ENCODE measurements at regions of chr17 and their contacts with region 1.

Region 1: DNA sequence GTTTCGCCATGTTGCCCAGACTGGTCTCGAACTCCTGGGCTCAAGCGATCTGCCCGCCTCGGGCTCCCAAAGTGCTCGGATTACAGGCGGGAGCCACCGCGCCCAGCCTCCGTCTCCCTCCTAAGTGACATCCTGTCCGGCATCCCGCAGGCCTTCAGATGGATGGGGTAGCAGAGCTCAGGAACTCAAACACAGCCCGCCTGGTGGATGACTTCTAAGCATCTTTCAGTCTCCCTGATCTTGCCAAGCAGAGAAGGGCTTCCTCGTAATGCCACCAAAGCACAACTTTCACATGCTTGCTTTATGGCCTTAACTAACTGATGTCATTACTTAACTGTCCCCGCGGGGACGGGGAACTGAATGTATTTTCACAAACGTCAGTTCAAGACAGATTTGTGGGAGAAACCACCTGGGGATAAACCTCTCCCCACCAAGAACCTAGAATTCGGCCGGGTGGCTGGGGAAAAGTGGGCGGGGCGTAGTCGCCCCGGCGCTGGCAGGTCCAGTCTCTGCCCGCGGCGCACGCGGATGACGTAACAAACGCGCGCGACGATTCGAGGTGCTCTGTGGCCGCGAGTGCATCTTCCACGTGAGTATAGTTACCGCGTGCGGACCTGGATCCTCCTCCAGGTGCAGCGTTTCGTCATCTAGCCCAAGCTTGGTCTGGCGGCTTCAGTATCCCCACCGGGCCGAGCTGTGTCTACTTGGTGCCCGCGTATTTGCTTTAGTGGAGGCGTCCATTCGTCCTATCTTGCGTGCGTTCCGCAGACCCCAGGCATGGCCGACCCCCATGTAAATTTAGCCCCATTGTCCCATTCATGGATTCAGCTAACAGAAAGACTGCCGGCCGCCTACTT is at the start of gene PFAS:
- DNase-seq: peak; percentile 98
- H3K4me3 Mint-ChIP-seq: peak within 1 kb of the TSS; percentile 99
- H3K27ac Mint-ChIP-seq: peak within 1 kb of the TSS; percentile 97
- H3K4me1 Mint-ChIP-seq: peaks cover 38% of the 10 kb centered on the region
- H3K27me3 Mint-ChIP-seq: no peaks in the 10 kb centered on the region
- total RNA-seq, gene PFAS: 102 to 105 TPM

Region 2: GRCh38 chr17:8138672-8139371 is 110.2 kb before region 1 on chr17:
- CTCF ChIA-PET with region 1: no interaction called
- POLR2A ChIA-PET with region 1: no interaction called
- intact Hi-C with region 1: loop called (anchors 1 kb)
- DNase-seq: peak; percentile 98
- H3K4me3 Mint-ChIP-seq: no peak overlapping the region
- H3K27ac Mint-ChIP-seq: no peak overlapping the region
- H3K4me1 Mint-ChIP-seq: peaks cover 2% of the 10 kb centered on the region
- H3K27me3 Mint-ChIP-seq: peaks cover 1% of the 10 kb centered on the region

Region 3: DNA sequence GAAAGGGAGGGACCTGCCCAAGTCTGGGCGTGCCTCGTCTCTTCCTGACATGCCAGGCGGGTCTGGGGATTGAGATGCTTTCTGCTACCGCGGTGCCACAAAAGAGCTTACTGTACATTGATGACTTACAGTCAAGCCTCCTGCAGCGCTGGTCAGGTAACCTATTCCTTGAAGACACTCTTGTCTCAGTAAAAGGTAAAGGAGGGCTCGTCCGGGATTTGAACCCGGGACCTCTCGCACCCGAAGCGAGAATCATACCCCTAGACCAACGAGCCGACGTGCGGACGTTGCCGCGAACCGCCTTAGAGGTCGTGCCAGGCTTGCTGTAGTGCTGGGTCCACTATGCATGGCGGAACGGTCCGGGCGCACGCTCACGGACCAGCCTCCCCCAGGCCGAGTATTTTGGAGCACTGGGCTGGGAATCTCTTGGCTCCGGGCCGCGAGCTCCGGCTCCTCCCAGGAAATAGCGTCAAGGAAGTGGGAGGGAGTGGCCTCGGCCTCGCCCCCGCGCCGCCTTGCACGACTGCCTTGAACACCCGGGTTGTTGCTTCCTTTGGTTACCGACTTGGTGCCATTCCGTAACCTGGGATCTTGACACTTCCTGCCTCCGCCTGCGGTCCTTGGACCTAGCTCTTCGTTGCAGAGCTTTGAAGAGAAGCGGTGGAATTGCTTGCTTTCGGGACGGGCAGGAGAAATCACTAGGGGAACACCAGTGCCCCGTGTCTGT is 26.2 kb before region 1 on chr17:
- CTCF ChIA-PET with region 1: interaction called, 37 read pairs
- POLR2A ChIA-PET with region 1: interaction called, 134 read pairs
- intact Hi-C with region 1: loop called (anchors 1 kb)
- DNase-seq: peak; percentile 94
- H3K4me3 Mint-ChIP-seq: peak overlapping the region; percentile 98
- H3K27ac Mint-ChIP-seq: peak overlapping the region; percentile 98
- H3K4me1 Mint-ChIP-seq: peaks cover 47% of the 10 kb centered on the region
- H3K27me3 Mint-ChIP-seq: peaks cover 14% of the 10 kb centered on the region

Region 4: GRCh38 chr17:8294814-8295316 is 45.9 kb after region 1 on chr17:
- CTCF ChIA-PET with region 1: interaction called, 14 read pairs
- POLR2A ChIA-PET with region 1: interaction called, 17 read pairs
- intact Hi-C with region 1: loop called (anchors 1 kb)
- DNase-seq: no peak
- H3K4me3 Mint-ChIP-seq: peak overlapping the region; percentile 80
- H3K27ac Mint-ChIP-seq: peak overlapping the region; percentile 77
- H3K4me1 Mint-ChIP-seq: peaks cover 33% of the 10 kb centered on the region
- H3K27me3 Mint-ChIP-seq: no peaks in the 10 kb centered on the region

Region 5: GRCh38 chr17:8359769-8360168 is 110.8 kb after region 1 on chr17:
- CTCF ChIA-PET with region 1: no interaction called
- POLR2A ChIA-PET with region 1: no interaction called
- intact Hi-C with region 1: no loop called
- DNase-seq: no peak
- H3K4me3 Mint-ChIP-seq: no peak overlapping the region
- H3K27ac Mint-ChIP-seq: no peak overlapping the region
- H3K4me1 Mint-ChIP-seq: peaks cover 5% of the 10 kb centered on the region
- H3K27me3 Mint-ChIP-seq: no peaks in the 10 kb centered on the region

Region 6: DNA sequence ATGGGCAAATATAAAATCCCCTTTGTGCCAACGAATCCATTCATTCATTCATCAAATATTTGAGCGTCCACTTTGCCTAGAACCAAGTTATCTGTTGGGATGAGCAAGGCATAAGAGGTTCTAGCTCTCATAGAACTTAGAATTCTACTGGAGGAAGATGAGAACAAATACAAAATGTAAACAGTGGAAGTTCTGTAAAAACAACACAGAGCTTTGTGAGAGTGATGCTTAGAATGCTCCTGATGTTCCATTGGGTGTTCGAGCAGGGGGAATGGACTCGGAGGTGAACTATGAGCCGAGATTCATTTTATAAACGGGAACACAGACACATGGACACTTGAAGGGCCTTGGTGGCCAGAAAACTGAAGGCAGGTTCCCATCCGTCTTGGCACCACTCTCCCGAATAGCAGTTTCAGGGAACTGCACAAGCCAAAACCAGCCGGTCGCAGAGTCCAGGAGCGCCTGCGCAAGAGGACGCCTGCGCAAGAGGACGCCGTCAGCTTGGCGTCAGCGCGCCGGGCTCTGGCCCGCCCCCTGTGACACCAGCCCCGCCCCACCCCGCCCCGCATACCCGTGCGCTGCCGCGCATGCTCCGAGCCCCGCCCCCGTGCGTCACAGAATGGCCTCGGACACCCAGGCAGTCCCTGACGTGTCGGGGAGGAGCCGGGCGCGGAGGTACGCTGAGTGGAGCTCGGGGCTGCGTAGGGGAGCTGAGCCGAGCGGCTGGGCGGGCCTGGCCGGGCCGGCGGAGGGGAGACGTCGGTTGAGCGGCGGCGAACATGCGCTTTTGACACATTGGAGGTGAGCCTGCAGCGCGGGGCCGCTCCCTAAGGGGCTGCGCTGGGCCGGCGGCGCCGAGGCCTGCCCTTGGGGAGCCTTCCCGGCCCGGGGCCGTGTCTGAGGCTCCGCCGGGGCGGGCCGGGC is 186.5 kb after region 1 on chr17 and contains the start of gene NDEL1:
- CTCF ChIA-PET with region 1: no interaction called
- POLR2A ChIA-PET with region 1: no interaction called
- intact Hi-C with region 1: loop called (anchors 5 kb)
- DNase-seq: peak; percentile 99
- H3K4me3 Mint-ChIP-seq: peak within 1 kb of the TSS; percentile 92
- H3K27ac Mint-ChIP-seq: peak within 1 kb of the TSS; percentile 91
- H3K4me1 Mint-ChIP-seq: peaks cover 31% of the 10 kb centered on the region
- H3K27me3 Mint-ChIP-seq: no peaks in the 10 kb centered on the region
- total RNA-seq, gene NDEL1: 58.0 to 62.8 TPM

Measured in activated CD4-positive, alpha-beta memory T cell treated with anti-CD3 and anti-CD28 coated beads for 36 hours (primary cell).